GM10248 (cell line): ENCODE measurements at regions of chr2 and their contacts with region 1.

Region 1: GRCh38 chr2:74414881-74415761 is 6.3 kb downstream of the C2orf81 start:
- DNase-seq: peak; percentile 51
- CTCF ChIP-seq: peak; percentile 23

Region 2: GRCh38 chr2:74399785-74400184 is 15.3 kb before region 1 on chr2:
- CTCF ChIA-PET with region 1: interaction called, 22 read pairs
- POLR2A ChIA-PET with region 1: no interaction called
- DNase-seq: peak; percentile 53
- CTCF ChIP-seq: peak; percentile 42

Region 3: GRCh38 chr2:74436798-74437695 is 21.9 kb after region 1 on chr2:
- CTCF ChIA-PET with region 1: no interaction called
- POLR2A ChIA-PET with region 1: no interaction called
- DNase-seq: peak; percentile 55
- CTCF ChIP-seq: no peak